Common myeloid progenitor, CD34-positive (primary cell): ENCODE measurements at regions of chr2 and their contacts with region 1.

Region 1: GRCh38 chr2:68330691-68331090 is 10.9 kb upstream of the CNRIP1 start:
- DNase-seq: no peak
- H3K4me3 ChIP-seq: no peak overlapping the region
- H3K27ac ChIP-seq: no peak overlapping the region
- H3K4me1 ChIP-seq: no peaks in the 10 kb centered on the region
- H3K27me3 ChIP-seq: no peaks in the 10 kb centered on the region

Region 2: GRCh38 chr2:68319398-68320117 is 11.1 kb before region 1 on chr2 and contains the start of gene CNRIP1:
- CTCF ChIA-PET with region 1: interaction called, 10 read pairs
- POLR2A ChIA-PET with region 1: no interaction called
- DNase-seq: peak in 2 of 3 donors; percentile 43 to 64
- H3K4me3 ChIP-seq: peak within 1 kb of the TSS; percentile 48 to 82 (median 72)
- H3K27ac ChIP-seq: no peak within 1 kb of the TSS
- H3K4me1 ChIP-seq: peaks cover 5 to 21% (median 17%) of the 10 kb centered on the region in 4 experiments
- H3K27me3 ChIP-seq: peaks cover 0 to 36% (median 3%) of the 10 kb centered on the region in 5 experiments

Region 3: GRCh38 chr2:68345129-68345875 is 14.6 kb after region 1 on chr2:
- CTCF ChIA-PET with region 1: no interaction called
- POLR2A ChIA-PET with region 1: no interaction called
- DNase-seq: no peak
- H3K4me3 ChIP-seq: no peak overlapping the region
- H3K27ac ChIP-seq: no peak overlapping the region
- H3K4me1 ChIP-seq: peaks cover 0 to 3% (median 0%) of the 10 kb centered on the region in 4 experiments
- H3K27me3 ChIP-seq: no peaks in the 10 kb centered on the region